OCI-LY7 (cell line): ENCODE measurements at regions of chr7 and their contacts with region 1.

Region 1: DNA sequence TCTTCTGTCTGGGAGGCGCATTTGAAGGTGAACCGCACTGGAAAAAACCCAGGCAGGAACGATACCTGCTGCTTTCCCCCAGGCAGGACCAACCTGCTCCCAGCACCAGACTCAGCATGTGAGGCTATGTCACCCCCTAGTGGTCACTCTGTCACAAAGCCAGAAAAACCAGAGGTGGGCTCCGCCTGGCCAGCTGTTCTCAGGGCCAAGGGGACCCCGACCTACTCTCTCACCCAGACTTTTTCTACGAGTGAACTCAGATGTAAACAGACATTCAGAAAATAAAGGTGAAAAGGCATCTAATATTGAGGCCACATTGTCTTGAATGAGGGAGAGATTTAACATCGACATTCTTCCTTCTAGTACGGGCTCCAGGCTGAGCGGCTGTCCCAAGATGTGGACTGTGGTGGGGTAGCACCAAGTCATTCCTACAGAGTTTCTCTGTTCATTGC is 117.3 kb downstream of the PRKAG2 start:
- DNase-seq: peak; percentile 62
- H3K4me3 ChIP-seq: no peak overlapping the region
- H3K27ac ChIP-seq: no peak overlapping the region
- H3K4me1 ChIP-seq: no peaks in the 10 kb centered on the region
- CTCF ChIP-seq: peak; percentile 92

Region 2: GRCh38 chr7:151368136-151368571 is 391.5 kb before region 1 on chr7:
- CTCF ChIA-PET with region 1: no interaction called
- POLR2A ChIA-PET with region 1: no interaction called
- intact Hi-C with region 1: loop called (anchors 1 kb)
- DNase-seq: peak; percentile 78
- H3K4me3 ChIP-seq: no peak overlapping the region
- H3K27ac ChIP-seq: no peak overlapping the region
- H3K4me1 ChIP-seq: peaks cover 3% of the 10 kb centered on the region
- CTCF ChIP-seq: peak; percentile 92

Region 3: GRCh38 chr7:151448261-151449252 is 311.1 kb before region 1 on chr7:
- CTCF ChIA-PET with region 1: no interaction called
- POLR2A ChIA-PET with region 1: interaction called, 5 read pairs
- intact Hi-C with region 1: loop called (anchors 10 kb)
- DNase-seq: peak; percentile 68
- H3K4me3 ChIP-seq: peak overlapping the region; percentile 51
- H3K27ac ChIP-seq: no peak overlapping the region
- H3K4me1 ChIP-seq: no peaks in the 10 kb centered on the region
- CTCF ChIP-seq: peak; percentile 82

Region 4: DNA sequence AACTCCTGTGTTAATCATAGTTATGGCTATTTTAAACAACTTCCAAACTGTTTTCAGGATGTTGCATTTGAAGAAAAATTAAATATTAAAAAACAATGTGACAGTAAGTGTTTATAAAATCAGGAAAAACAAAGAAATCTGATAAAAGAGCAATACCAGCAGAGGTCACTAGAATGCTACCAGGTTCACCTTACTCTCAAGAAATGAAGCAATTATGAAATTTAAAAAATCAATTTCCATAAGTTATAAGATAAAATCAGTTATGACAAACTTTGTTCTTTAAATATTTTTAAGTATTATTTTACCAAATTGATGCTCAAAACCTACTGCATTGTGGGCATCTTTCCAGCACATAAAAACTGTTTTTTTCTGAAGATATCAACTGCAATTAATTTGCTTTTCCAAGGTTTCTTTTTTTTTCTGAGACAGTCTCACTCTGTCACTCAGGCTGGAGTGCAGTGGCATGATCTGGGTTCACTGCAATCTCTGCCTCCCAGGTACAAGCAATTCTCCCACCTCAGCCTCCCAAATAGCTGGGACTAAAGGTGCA is 189.2 kb before region 1 on chr7:
- CTCF ChIA-PET with region 1: no interaction called
- POLR2A ChIA-PET with region 1: no interaction called
- intact Hi-C with region 1: loop called (anchors 10 kb)
- DNase-seq: peak; percentile 8
- H3K4me3 ChIP-seq: no peak overlapping the region
- H3K27ac ChIP-seq: no peak overlapping the region
- H3K4me1 ChIP-seq: no peaks in the 10 kb centered on the region
- CTCF ChIP-seq: peak; percentile 75

Region 5: GRCh38 chr7:151626422-151627115 is 133.0 kb before region 1 on chr7:
- CTCF ChIA-PET with region 1: no interaction called
- POLR2A ChIA-PET with region 1: no interaction called
- intact Hi-C with region 1: loop called (anchors 5 kb)
- DNase-seq: peak; percentile 37
- H3K4me3 ChIP-seq: no peak overlapping the region
- H3K27ac ChIP-seq: no peak overlapping the region
- H3K4me1 ChIP-seq: peaks cover 8% of the 10 kb centered on the region
- CTCF ChIP-seq: peak; percentile 73